ENCODE measurements at regions of chr16 and their contacts with region 1.

Region 1: DNA sequence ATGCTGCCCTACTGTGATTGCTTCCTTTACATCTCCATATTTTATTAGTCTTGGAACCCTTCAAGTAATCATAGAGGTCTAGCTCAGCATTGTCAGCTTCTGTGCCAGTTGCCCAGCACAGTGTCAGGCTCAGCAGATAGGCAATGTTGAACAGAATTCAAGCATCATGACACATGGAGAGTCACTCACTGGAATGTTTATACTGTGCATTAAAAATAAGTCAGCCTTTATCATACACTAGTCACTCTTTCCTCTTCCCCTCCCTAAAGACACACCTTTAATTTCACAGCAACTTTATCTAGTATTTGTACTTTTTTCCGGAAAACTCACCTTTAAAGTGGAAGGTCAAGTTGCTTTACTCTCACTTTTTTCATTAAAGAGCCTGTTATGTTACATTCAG is 253.8 kb upstream of the CDH11 start:
- DNase-seq: peak; percentile 59
- H3K4me3 ChIP-seq: no peak overlapping the region
- H3K27ac ChIP-seq: no peak overlapping the region
- H3K4me1 ChIP-seq: peaks cover 26% of the 10 kb centered on the region
- H3K27me3 ChIP-seq: no peaks in the 10 kb centered on the region
- CTCF ChIP-seq: no peak

Region 2: DNA sequence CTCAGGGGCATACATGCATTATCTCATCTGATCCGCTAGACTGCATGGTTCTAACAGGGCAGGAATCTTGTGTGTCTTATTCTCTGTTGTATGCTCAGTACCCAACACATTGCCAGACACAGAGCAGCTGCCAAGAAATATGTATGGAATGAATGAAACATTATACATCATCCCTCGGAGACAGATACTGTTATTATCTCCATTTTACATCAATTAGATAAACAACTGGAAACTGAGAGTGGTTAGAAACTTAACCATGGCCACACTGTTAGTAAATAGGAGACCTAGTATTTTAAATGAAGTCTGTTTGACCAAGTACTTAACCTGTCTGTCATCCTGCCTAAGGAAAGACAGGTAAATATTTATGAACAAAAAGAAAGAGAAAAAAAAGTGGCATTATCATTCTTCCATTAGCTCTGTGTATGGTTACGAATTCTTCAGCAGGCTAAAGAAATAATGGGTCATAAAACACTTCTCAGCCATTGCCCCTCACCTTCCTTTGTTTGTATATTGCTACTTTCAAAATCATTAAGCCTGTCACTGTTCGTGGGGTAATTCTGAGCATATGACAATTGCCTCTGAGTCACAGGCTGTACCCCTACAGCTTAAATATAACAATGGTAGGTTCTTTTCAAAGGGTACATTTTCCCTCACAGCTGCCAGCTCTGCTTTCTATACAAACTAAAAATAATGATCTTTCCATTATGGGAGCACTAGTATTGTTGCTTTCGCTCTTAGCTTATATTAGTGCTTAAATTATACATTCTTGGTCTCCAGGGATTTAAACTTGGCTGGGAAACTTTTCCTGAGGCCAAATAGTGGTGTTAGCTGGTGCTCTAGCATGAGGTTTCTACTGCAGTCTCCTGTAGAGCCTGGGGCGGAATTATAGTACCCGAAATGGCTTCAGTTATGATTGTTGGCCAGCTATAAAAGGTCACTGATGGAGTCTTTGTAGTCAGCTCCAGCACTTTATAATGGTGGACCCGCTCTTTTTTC is 179.3 kb before region 1 on chr16:
- CTCF ChIA-PET with region 1: no interaction called
- dilution Hi-C with region 1: no loop called
- in situ Hi-C with region 1: no loop called
- intact Hi-C with region 1: no loop called
- DNase-seq: no peak
- H3K4me3 ChIP-seq: no peak overlapping the region
- H3K27ac ChIP-seq: no peak overlapping the region
- H3K4me1 ChIP-seq: peaks cover 9% of the 10 kb centered on the region
- H3K27me3 ChIP-seq: no peaks in the 10 kb centered on the region
- CTCF ChIP-seq: no peak

Region 3: DNA sequence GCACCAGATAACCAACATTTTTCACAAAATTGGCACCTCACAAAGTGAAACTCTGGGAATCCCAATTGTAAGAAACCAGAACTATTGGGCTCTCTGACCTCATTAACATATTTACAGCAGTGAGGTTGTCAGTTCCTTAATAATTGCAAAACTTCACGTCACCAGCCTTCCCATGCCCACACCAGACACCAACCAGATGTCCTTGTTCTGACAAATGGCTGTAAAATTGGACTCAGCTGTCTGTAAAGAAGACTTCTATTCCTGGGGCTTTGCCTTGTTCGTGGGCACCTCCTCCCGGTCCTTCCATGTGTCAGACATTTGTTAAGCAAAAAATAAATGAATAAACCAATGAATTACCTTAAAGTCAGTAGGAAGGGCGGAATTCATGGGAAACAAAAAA is 30.4 kb after region 1 on chr16:
- CTCF ChIA-PET with region 1: no interaction called
- dilution Hi-C with region 1: no loop called
- in situ Hi-C with region 1: no loop called
- intact Hi-C with region 1: loop called (anchors 2 kb)
- DNase-seq: no peak
- H3K4me3 ChIP-seq: no peak overlapping the region
- H3K27ac ChIP-seq: no peak overlapping the region
- H3K4me1 ChIP-seq: peaks cover 19% of the 10 kb centered on the region
- H3K27me3 ChIP-seq: no peaks in the 10 kb centered on the region
- CTCF ChIP-seq: no peak

Region 4: GRCh38 chr16:65497571-65497970 is 121.9 kb after region 1 on chr16:
- CTCF ChIA-PET with region 1: no interaction called
- dilution Hi-C with region 1: no loop called
- in situ Hi-C with region 1: no loop called
- intact Hi-C with region 1: no loop called
- DNase-seq: no peak
- H3K4me3 ChIP-seq: no peak overlapping the region
- H3K27ac ChIP-seq: no peak overlapping the region
- H3K4me1 ChIP-seq: peaks cover 7% of the 10 kb centered on the region
- H3K27me3 ChIP-seq: no peaks in the 10 kb centered on the region
- CTCF ChIP-seq: no peak